Activated CD4-positive, alpha-beta T cell treated with anti-CD3 and anti-CD28 coated beads, Interleukin-2, amount 10 ng/mL, durations not matched to agents 24 days and 14 days (primary cell): ENCODE measurements at regions of chr19 and their contacts with region 1.

Region 1: GRCh38 chr19:20923077-20923871 is at the start of gene ZNF85:
- DNase-seq: peak; percentile 96
- H3K4me3 Mint-ChIP-seq: peak within 1 kb of the TSS; percentile 98
- H3K27ac Mint-ChIP-seq: peak within 1 kb of the TSS; percentile 98
- H3K4me1 Mint-ChIP-seq: peaks cover 9% of the 10 kb centered on the region
- H3K27me3 Mint-ChIP-seq: no peaks in the 10 kb centered on the region
- total RNA-seq, gene ZNF85: 9.9 and 11.9 TPM in 2 replicates

Region 2: GRCh38 chr19:20999731-21000352 is 76.6 kb after region 1 on chr19:
- intact Hi-C with region 1: loop called (anchors 5 kb)
- DNase-seq: peak; percentile 94
- H3K4me3 Mint-ChIP-seq: peak overlapping the region; percentile 94
- H3K27ac Mint-ChIP-seq: peak overlapping the region; percentile 84
- H3K4me1 Mint-ChIP-seq: peaks cover 7% of the 10 kb centered on the region
- H3K27me3 Mint-ChIP-seq: no peaks in the 10 kb centered on the region

Region 3: GRCh38 chr19:21082011-21082975 is 159.0 kb after region 1 on chr19 and contains the start of gene ZNF714:
- intact Hi-C with region 1: loop called (anchors 1 kb)
- DNase-seq: peak; percentile 96
- H3K4me3 Mint-ChIP-seq: peak within 1 kb of the TSS; percentile 96
- H3K27ac Mint-ChIP-seq: peak within 1 kb of the TSS; percentile 99
- H3K4me1 Mint-ChIP-seq: peaks cover 26% of the 10 kb centered on the region
- H3K27me3 Mint-ChIP-seq: no peaks in the 10 kb centered on the region
- total RNA-seq, gene ZNF714: 18.8 and 20.4 TPM in 2 replicates